ENCODE measurements at regions of chr17 and their contacts with region 1.

Region 1: DNA sequence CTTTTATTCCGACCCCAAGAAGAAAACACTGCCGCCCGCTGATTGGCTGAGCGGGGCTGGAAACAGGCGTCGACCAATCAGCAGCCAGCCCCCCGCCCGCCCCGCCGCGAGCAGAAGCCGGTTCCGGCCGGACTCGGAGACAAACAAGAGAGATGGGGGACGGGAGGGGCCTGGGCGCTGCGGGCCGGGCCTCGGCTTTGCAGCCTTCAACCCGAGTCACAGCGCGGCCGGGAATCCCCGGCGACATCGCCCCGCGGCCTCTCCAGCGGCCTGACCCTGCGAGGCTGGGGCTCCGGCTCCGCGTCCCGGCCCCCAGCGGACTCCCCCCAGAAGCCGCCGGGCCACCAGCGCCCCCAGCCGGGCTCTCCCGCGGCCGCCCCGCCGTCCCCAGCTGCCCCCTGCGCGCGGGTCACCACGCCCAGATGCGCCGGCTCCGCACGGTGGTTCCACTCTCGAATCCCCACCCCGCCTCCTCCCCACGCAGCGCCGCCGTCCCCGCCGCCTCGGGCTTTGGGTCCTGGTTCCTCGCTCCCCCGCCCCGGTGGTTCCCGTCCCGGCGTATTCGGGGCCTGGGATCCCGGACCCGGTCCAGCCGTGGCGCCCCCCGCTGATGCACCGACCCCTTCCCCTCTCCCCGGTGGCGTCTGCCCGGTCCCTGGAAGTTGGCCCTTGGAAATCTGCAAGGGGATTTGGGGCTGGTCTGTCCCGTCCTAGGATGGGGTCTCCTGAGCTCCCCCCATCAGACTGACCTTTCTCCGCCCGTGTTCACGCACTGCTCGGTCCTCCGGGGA is 417 bp upstream of the SLC43A2 start:
- DNase-seq: peak; percentile 97
- ATAC-seq: peak; percentile 67
- H3K4me3 Mint-ChIP-seq: peak overlapping the region; percentile 87
- H3K27ac Mint-ChIP-seq: peak overlapping the region; percentile 97
- H3K4me1 Mint-ChIP-seq: peaks cover 25% of the 10 kb centered on the region
- H3K27me3 Mint-ChIP-seq: peaks cover 19% of the 10 kb centered on the region
- CTCF ChIP-seq: no peak

Region 2: DNA sequence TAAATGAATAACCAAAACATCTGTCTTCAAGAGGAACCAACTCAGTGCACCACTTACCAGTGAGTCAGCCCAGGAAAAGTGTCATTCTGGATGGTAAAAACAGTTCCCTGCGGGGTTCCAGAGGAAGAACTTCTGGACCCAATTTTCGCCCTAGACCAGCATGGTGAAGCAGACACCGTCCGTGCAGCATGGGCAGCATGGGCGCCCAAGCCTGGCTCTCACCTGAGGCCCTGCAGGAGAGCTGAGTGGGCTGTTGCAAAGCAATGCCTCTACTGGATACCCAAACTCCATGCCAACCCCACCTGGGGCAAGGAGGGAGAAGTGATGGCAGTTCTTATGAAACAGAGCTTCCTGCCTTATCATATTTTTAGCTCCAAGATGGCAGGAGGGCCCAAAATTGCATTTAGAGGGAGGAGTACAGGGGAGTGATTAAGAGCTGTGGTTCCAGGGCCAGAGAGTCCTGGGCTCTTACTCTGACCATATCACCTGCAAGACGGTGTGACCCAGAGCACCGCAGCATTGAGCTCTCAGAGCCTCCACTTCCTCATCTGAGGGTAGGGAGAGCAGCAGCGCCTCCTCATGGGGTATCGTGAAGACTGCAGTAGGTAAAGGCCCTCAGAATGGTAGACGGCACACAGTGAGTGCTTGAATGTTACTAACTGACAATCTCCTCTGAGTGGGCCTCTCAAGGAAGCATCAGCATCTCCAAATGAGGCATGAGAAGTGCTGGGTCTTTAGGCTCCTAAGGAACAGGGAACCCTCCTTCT is 96.0 kb before region 1 on chr17:
- CTCF ChIA-PET with region 1: interaction called, 10 read pairs
- POLR2A ChIA-PET with region 1: no interaction called
- DNase-seq: peak; percentile 75
- ATAC-seq: peak; percentile 97
- H3K4me3 Mint-ChIP-seq: no peak overlapping the region
- H3K27ac Mint-ChIP-seq: no peak overlapping the region
- H3K4me1 Mint-ChIP-seq: no peaks in the 10 kb centered on the region
- H3K27me3 Mint-ChIP-seq: no peaks in the 10 kb centered on the region
- CTCF ChIP-seq: peak; percentile 37; the same call in 1 of the 2 replicates

Region 3: GRCh38 chr17:1590031-1590748 is 38.9 kb before region 1 on chr17:
- CTCF ChIA-PET with region 1: interaction called, 23 read pairs
- POLR2A ChIA-PET with region 1: no interaction called
- DNase-seq: no peak
- ATAC-seq: no peak
- H3K4me3 Mint-ChIP-seq: no peak overlapping the region
- H3K27ac Mint-ChIP-seq: no peak overlapping the region
- H3K4me1 Mint-ChIP-seq: peaks cover 29% of the 10 kb centered on the region
- H3K27me3 Mint-ChIP-seq: no peaks in the 10 kb centered on the region
- CTCF ChIP-seq: no peak

Region 4: DNA sequence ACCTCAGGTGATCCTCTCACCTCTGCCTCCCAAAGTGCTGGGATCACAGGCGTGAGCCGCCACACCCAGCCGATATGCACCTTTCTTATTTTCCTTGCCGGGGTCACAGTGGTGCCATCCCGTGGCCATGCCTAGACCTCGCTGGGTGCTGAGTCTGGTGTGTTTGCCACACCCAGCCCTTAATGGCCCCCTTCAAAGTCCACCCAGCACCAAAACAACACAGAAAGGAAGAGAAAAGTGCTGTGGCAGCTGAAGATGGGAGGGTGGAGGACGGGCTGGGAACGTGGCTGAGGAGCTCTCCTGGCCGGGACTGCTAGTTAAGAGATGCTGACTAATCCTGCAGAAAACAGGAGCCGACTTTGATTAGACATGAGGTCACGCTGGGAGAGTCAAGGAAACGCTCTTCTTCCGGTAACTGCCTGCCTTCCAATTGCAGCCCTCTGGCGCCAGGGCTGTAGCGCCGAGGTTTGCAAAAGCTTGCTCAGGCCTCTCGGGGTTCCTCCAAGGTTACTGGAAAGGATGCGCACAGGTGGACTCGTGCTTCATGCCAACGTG is 11.4 kb before region 1 on chr17:
- CTCF ChIA-PET with region 1: interaction called, 15 read pairs
- POLR2A ChIA-PET with region 1: interaction called, 6 read pairs
- DNase-seq: no peak
- ATAC-seq: no peak; the same call in 1 of the 2 replicates
- H3K4me3 Mint-ChIP-seq: no peak overlapping the region
- H3K27ac Mint-ChIP-seq: peak overlapping the region; percentile 79
- H3K4me1 Mint-ChIP-seq: no peaks in the 10 kb centered on the region; the same call in 1 of the 2 replicates
- H3K27me3 Mint-ChIP-seq: no peaks in the 10 kb centered on the region
- CTCF ChIP-seq: no peak

Region 5: DNA sequence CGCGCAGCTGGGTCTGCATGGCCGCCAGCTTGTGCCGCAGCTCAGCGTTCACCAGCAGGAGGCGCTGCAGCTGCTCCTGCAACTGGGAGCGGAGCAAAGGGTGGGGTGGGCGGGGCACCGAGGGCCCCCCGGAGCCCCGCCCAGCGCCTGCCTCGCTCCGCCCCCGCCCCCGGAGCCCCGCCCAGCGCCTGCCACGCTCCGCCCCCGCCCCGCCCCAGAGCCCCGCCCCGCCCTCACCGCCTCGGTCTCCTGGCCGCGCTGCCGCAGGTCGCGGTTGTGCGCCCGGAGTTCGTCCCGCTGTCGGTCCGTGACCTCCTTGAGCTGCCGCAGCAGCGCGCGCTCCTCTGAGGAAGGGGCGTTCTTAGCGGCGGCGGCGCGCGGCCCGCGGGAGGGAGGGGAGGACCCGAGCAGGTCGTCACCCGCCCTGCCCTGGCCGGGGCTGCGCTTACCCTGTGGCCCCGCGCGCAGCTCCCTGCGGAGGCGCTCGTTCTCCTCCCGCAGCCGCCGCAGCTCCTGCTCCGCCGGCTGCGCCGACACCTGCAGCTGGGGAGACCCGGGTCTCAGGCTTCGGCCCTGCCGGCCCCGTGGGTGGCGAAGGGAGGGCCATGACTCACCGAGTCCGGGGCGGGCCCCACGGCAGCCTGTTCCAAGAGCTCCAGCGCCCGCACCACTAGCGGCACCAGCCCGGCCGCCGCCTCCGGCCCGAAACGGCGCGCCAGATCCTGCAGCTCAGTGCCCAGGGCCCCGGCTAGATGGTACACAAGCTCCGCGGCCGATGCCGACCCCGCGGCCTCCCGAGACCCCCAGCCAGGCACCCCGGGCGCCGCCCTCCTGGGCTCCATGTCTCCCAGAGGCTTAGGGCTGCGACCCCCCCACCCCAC is 20.2 kb after region 1 on chr17:
- CTCF ChIA-PET with region 1: interaction called, 48 read pairs
- POLR2A ChIA-PET with region 1: interaction called, 12 read pairs
- DNase-seq: peak; percentile 95
- ATAC-seq: peak; percentile 56
- H3K4me3 Mint-ChIP-seq: peak overlapping the region; percentile 72
- H3K27ac Mint-ChIP-seq: no peak overlapping the region
- H3K4me1 Mint-ChIP-seq: peaks cover 29% of the 10 kb centered on the region
- H3K27me3 Mint-ChIP-seq: peaks cover 3% of the 10 kb centered on the region
- CTCF ChIP-seq: peak; percentile 86; the same call in 1 of the 2 replicates

Measured in WTC11 (cell line).